GM13976 (cell line): ENCODE measurements at regions of chr3 and their contacts with region 1.

Region 1: GRCh38 chr3:11803977-11804892 is 42.5 kb downstream of the TAMM41 start:
- DNase-seq: peak; percentile 63
- CTCF ChIP-seq: peak; percentile 56

Region 2: GRCh38 chr3:11610044-11610671 is 194.1 kb before region 1 on chr3:
- in situ Hi-C with region 1: no loop called
- DNase-seq: no peak
- CTCF ChIP-seq: no peak

Region 3: DNA sequence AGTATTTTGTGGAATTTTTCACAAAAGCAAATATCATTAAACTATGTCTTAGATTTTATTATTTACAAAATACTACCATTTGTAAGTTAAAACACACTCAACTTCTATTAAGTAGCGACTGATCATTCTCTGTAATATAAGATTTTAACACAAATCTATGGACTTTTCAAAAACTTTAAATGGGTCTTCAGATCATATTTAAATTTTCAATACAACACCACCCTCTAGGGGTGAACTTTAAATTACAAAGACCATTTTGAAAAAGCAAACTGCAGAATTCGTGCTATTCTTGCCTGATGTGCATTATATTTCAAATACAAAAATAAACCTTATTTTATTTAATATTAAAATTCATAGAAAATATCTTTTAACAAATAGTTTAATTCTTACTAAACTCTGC is 152.3 kb before region 1 on chr3:
- in situ Hi-C with region 1: loop called (anchors 10 kb)
- DNase-seq: peak; percentile 50
- CTCF ChIP-seq: peak; percentile 14